A549 (cell line): ENCODE measurements at regions of chr17 and their contacts with region 1.

Region 1: DNA sequence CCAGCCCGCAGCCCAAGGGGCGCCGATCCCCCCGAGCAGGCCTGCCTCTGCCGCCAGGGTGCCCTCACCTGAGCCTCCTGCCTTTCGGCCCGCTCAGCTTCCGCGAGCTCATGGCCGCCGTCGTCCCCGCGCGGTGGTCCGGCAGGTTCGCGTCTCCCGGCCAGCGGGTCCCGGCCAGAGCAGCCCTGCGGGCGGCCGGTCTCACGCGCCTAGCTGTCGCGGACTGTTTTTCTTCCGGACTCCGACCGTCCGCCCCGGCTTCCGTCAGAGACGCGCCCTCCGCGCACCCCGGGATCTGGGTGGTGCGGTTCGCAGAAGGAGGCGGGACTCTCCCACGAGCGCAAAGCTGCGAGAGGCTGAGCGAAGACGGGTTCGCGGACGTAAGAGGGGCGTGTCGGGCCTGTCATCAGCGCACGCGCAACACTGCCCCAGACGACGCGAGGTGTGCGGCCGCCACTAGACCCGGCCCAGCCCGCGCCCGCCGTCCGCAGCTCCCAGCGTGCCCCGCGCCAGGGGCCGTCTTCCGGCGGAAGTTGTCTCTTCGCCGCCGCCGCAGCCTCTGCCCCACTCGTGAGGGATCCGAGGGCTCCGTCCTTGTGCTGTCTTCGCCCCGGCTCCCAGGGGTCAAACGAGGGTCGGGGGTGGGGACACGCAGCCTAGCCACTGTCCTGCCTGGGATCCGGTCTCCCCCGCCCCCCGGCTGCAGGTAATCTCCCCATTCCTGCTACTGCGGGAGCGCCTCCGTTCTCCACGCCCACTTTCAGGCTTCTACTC is at the start of gene INPP5K:
- DNase-seq: peak; percentile 99
- ATAC-seq: peak; percentile 90 to 95
- H3K4me3 ChIP-seq: peak within 1 kb of the TSS; percentile 76
- H3K27ac ChIP-seq: peak within 1 kb of the TSS; percentile 95
- H3K4me1 ChIP-seq: peaks cover 12% of the 10 kb centered on the region; the same call in 2 of the 3 replicates
- CTCF ChIP-seq: no peak
- EP300 ChIP-seq: no peak
- POLR2A ChIP-seq: peak; percentile 91
- RAD21 ChIP-seq: no peak; a peak in 1 of 5 replicates
- polyA plus RNA-seq, gene INPP5K: 30.8 and 41.8 TPM in 2 replicates

Region 2: DNA sequence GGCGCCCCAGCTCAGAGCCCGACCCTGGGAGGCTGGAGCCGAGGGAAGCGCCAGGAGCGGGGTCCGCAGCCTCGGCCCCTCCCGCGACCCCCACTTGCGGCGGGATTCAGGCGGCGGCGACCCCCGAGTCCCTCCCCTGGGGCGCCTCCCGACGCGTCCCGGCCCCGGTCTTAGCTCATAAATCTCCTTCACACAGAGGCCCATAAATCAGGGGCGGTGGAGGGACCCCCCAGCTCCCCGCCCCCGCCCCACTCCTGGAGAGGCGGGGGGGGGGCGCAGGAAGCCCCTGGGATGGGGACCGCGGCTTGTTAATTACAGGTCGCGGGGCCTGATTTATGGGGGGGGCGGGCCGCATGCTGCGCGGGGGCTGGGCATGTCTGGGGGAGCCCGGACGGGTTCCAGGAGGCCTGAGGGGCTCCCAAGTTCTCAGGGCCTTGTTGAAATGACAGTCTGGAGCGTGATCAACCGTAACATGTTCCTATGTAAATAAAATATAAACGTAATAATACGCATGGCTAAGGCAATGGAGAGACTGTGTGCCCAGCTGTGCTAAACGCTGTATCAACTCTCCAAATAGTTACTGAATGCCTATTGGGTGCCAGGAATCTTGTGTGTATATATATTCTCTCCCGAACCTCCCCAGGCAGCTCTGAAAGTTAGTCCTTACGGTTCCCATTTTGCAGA is 256.3 kb before region 1 on chr17:
- CTCF ChIA-PET with region 1: interaction called, 13 read pairs
- POLR2A ChIA-PET with region 1: interaction called, 3 read pairs
- DNase-seq: no peak
- ATAC-seq: peak in 1 of 2 experiments; percentile 12; a peak in 3 of 6 replicates
- H3K4me3 ChIP-seq: peak overlapping the region; percentile 57
- H3K27ac ChIP-seq: peak overlapping the region; percentile 72 to 82
- H3K4me1 ChIP-seq: no peaks in the 10 kb centered on the region
- CTCF ChIP-seq: no peak
- EP300 ChIP-seq: no peak
- POLR2A ChIP-seq: no peak
- RAD21 ChIP-seq: no peak

Region 3: GRCh38 chr17:1275962-1276736 is 240.4 kb before region 1 on chr17:
- CTCF ChIA-PET with region 1: interaction called, 15 read pairs
- POLR2A ChIA-PET with region 1: no interaction called
- DNase-seq: peak; percentile 54 to 79
- ATAC-seq: peak; percentile 68 to 88
- H3K4me3 ChIP-seq: 0 out of 3 replicates have a peak overlapping the region, but pooled peaks have one; percentile 24
- H3K27ac ChIP-seq: peak overlapping the region in 1 of 2 experiments; percentile 5; a peak in 2 of 6 replicates
- H3K4me1 ChIP-seq: 0 out of 3 replicates have a peak, but pooled peaks cover 4% of the 10 kb centered on the region
- CTCF ChIP-seq: peak; percentile 93
- EP300 ChIP-seq: no peak
- POLR2A ChIP-seq: no peak
- RAD21 ChIP-seq: peak; percentile 92 to 94

Region 4: DNA sequence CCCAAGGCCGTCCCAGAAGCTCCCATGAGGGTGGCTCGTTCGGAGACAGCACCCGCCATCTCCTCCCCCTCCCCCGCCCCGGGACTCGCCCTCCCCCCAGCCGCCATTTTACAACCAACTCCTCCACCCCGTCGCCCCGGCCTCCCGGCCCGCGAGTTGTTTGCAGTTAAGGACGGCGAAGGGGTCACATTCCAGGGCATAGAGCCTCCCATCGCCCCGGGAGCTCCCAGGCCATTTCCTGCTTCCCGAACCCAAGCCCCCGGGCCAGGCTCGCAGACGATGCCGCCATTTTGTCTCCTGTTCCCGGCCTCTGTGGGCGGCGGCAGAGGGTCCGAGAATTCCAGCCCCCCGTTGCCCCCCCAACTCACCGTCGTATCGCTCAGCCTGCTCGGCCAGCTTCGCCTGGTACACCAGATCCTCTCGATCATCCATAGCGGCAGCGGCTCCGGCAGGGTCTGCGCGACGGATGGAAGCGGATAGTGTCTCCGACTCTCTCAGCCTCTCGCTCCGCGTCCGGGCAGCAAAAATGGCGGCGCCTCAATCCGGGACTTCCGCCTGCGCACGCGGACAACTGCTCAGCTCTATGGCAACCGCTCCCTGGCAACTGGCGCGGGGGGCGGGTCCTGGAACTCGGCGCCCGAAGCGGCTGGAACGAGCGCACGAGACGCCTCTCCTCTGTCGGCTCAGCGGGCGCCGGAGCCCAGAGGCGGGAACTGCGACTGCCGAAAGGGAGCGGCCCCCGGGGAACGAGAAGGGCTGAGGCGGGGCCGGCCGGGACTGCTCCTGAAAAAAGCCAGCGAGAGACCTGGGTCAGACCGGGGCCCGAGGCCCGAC is 116.7 kb before region 1 on chr17 and contains the start of gene YWHAE:
- CTCF ChIA-PET with region 1: interaction called, 4 read pairs
- POLR2A ChIA-PET with region 1: interaction called, 10 read pairs
- DNase-seq: peak; percentile 96 to 97
- ATAC-seq: peak; percentile 96 to 97
- H3K4me3 ChIP-seq: peak within 1 kb of the TSS; percentile 84
- H3K27ac ChIP-seq: peak within 1 kb of the TSS; percentile 94 to 98
- H3K4me1 ChIP-seq: peaks cover 21% of the 10 kb centered on the region
- CTCF ChIP-seq: no peak
- EP300 ChIP-seq: no peak
- POLR2A ChIP-seq: peak; percentile 95
- RAD21 ChIP-seq: no peak; a peak in 1 of 5 replicates
- polyA plus RNA-seq, gene YWHAE: 1,017 and 1,284 TPM in 2 replicates

Region 5: GRCh38 chr17:1495265-1495989 is 21.1 kb before region 1 on chr17:
- CTCF ChIA-PET with region 1: interaction called, 68 read pairs
- POLR2A ChIA-PET with region 1: interaction called, 29 read pairs
- DNase-seq: no peak
- ATAC-seq: no peak
- H3K4me3 ChIP-seq: no peak overlapping the region
- H3K27ac ChIP-seq: no peak overlapping the region
- H3K4me1 ChIP-seq: peaks cover 9% of the 10 kb centered on the region; the same call in 2 of the 3 replicates
- CTCF ChIP-seq: no peak
- EP300 ChIP-seq: no peak
- POLR2A ChIP-seq: no peak
- RAD21 ChIP-seq: no peak

Region 6: GRCh38 chr17:1532836-1533602 is 16.4 kb after region 1 on chr17:
- CTCF ChIA-PET with region 1: interaction called, 21 read pairs
- POLR2A ChIA-PET with region 1: interaction called, 20 read pairs
- DNase-seq: peak in 1 of 2 experiments; percentile 62
- ATAC-seq: peak; percentile 63 to 84; a peak in 5 of 6 replicates
- H3K4me3 ChIP-seq: no peak overlapping the region
- H3K27ac ChIP-seq: no peak overlapping the region
- H3K4me1 ChIP-seq: peaks cover 3% of the 10 kb centered on the region; the same call in 1 of the 3 replicates
- CTCF ChIP-seq: peak; percentile 25; the same call in 1 of the 3 replicates
- EP300 ChIP-seq: no peak
- POLR2A ChIP-seq: no peak
- RAD21 ChIP-seq: peak in 1 of 2 experiments; percentile 35; a peak in 2 of 5 replicates

Region 7: DNA sequence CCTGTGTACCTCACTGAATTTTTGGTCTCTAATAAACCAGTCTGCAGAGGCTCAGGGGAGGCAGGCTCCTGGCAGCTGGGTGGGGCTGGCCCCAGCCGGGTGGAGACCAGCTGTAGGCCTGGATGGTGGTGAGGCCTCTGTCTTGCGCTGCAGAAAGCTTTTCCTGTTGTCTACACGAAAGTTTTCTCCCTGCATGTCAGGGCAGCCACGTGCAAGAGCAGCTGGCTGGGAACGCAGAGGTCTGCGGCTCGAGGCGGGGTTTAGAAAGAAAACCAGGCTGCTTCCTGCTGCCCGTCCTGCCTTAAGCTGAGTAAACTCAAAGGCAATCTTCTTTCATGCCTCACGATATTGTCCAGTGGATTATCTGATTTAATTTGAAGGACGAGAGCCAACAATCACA is 247.7 kb after region 1 on chr17:
- CTCF ChIA-PET with region 1: no interaction called
- POLR2A ChIA-PET with region 1: no interaction called
- DNase-seq: no peak
- ATAC-seq: peak in 1 of 2 experiments; percentile 11; a peak in 2 of 6 replicates
- H3K4me3 ChIP-seq: no peak overlapping the region
- H3K27ac ChIP-seq: 0 out of 6 replicates have a peak overlapping the region, but pooled peaks of 1 of the 2 experiments have one; percentile 17
- H3K4me1 ChIP-seq: peaks cover 20% of the 10 kb centered on the region
- CTCF ChIP-seq: no peak
- EP300 ChIP-seq: no peak
- POLR2A ChIP-seq: no peak
- RAD21 ChIP-seq: no peak